ENCODE measurements at regions of chr11 and their contacts with region 1.

Region 1: DNA sequence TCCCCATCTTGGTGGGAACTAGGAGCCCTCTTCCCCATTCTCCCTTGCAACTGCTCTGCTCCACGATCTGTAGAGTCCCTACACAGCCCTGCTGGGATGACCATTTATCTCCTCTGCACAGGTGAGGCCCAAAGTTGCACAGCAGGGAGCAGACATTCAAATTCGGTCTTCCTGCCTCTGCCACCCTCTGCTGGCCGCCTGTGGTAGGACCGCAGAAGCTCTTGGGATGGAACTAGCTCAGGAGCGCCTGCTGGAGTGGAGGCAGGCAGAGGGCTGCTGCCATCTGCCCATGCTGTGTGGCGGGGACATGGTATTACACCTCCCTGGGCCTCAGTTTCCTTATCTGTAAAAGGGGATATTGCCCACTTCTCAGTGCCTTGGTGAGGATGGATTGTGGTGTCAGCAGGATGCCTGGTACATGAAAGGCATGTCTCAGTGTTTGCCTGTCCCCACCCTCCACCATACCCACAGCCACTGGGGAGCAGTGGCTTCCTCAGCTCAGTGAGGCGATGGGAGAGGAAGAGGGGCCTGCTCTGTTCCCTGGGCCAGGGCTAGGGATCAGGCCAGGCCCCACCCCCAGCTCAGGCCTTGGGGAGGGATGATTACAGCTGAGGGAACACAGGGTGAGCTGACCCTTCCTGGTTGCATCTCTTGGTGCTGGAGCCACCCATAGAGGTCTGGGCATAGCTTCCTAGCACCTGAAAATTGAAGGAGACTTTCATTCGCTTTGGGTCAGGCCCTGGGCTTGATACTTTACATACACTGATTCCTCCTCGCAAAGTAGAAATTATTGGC is 11.3 kb upstream of the OMP start:
- DNase-seq: peak; percentile 73 to 97
- H3K4me3 ChIP-seq: no peak overlapping the region
- H3K27ac ChIP-seq: no peak overlapping the region
- H3K4me1 ChIP-seq: peaks cover 0 to 8% (median 2%) of the 10 kb centered on the region in 4 experiments; a peak in 3 of 7 replicates
- H3K27me3 ChIP-seq: no peaks in the 10 kb centered on the region
- CTCF ChIP-seq: peak; percentile 96 to 100 (median 100)
- EP300 ChIP-seq: no peak
- POLR2A ChIP-seq: no peak
- RAD21 ChIP-seq: peak; percentile 92 to 93

Region 2: DNA sequence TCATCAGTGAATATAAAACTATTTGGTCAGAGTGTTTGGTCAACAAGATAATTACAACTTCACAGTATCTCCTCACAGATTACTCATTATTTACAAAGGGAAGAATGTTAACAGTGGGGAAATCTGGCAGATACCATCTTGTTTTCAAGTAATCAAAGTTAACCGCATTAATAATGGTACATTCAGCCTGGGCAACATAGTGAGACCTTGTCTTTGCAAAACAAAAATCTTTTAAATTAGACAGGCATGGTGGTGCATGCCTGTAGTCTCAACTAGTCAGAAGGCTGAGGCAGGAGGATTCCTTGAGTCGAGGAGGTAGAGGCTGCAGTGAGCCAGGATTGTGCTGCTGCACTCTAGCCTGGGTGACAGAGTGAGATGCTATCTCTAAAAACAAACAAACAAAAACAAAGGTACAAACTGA is 152.1 kb before region 1 on chr11:
- CTCF ChIA-PET with region 1: no interaction called
- POLR2A ChIA-PET with region 1: no interaction called
- DNase-seq: no peak
- H3K4me3 ChIP-seq: no peak overlapping the region
- H3K27ac ChIP-seq: no peak overlapping the region
- H3K4me1 ChIP-seq: peaks cover 0 to 7% (median 0%) of the 10 kb centered on the region in 4 experiments; a peak in 3 of 7 replicates
- H3K27me3 ChIP-seq: no peaks in the 10 kb centered on the region
- CTCF ChIP-seq: no peak
- EP300 ChIP-seq: no peak
- POLR2A ChIP-seq: no peak
- RAD21 ChIP-seq: no peak

Region 3: GRCh38 chr11:76990628-76991027 is 100.7 kb before region 1 on chr11:
- CTCF ChIA-PET with region 1: no interaction called
- POLR2A ChIA-PET with region 1: no interaction called
- DNase-seq: no peak
- H3K4me3 ChIP-seq: no peak overlapping the region
- H3K27ac ChIP-seq: no peak overlapping the region
- H3K4me1 ChIP-seq: no peaks in the 10 kb centered on the region
- H3K27me3 ChIP-seq: no peaks in the 10 kb centered on the region
- CTCF ChIP-seq: no peak
- EP300 ChIP-seq: no peak
- POLR2A ChIP-seq: no peak
- RAD21 ChIP-seq: no peak

Region 4: DNA sequence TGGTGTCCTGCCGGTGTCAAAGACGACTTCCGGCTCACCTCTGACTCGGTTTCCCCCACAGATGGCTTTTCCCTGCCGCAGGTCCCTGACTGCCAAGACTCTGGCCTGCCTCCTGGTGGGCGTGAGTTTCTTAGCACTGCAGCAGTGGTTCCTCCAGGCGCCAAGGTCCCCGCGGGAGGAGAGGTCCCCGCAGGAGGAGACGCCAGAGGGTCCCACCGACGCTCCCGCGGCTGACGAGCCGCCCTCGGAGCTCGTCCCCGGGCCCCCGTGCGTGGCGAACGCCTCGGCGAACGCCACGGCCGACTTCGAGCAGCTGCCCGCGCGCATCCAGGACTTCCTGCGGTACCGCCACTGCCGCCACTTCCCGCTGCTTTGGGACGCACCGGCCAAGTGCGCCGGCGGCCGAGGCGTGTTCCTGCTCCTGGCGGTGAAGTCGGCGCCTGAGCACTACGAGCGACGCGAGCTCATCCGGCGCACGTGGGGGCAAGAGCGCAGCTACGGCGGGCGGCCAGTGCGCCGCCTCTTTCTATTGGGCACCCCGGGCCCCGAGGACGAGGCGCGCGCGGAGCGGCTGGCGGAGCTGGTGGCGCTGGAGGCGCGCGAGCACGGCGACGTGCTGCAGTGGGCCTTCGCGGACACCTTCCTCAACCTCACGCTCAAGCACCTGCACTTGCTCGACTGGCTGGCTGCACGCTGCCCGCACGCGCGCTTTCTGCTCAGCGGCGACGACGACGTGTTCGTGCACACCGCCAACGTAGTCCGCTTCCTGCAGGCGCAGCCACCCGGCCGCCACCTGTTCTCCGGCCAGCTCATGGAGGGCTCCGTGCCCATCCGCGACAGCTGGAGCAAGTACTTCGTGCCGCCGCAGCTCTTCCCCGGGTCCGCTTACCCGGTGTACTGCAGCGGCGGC is 51.6 kb before region 1 on chr11:
- CTCF ChIA-PET with region 1: interaction called, 23 read pairs
- POLR2A ChIA-PET with region 1: interaction called, 3 read pairs
- DNase-seq: peak in 1 of 2 experiments; percentile 86
- H3K4me3 ChIP-seq: peak overlapping the region; percentile 9 to 51 (median 17); a peak in 5 of 8 replicates
- H3K27ac ChIP-seq: no peak overlapping the region
- H3K4me1 ChIP-seq: peaks cover 0 to 9% (median 4%) of the 10 kb centered on the region in 4 experiments; a peak in 5 of 7 replicates
- H3K27me3 ChIP-seq: peaks cover 14 to 34% (median 30%) of the 10 kb centered on the region in 4 experiments
- CTCF ChIP-seq: peak; percentile 71 to 79 (median 72)
- EP300 ChIP-seq: no peak
- POLR2A ChIP-seq: no peak
- RAD21 ChIP-seq: peak; percentile 54 to 70; a peak in 3 of 4 replicates

Region 5: DNA sequence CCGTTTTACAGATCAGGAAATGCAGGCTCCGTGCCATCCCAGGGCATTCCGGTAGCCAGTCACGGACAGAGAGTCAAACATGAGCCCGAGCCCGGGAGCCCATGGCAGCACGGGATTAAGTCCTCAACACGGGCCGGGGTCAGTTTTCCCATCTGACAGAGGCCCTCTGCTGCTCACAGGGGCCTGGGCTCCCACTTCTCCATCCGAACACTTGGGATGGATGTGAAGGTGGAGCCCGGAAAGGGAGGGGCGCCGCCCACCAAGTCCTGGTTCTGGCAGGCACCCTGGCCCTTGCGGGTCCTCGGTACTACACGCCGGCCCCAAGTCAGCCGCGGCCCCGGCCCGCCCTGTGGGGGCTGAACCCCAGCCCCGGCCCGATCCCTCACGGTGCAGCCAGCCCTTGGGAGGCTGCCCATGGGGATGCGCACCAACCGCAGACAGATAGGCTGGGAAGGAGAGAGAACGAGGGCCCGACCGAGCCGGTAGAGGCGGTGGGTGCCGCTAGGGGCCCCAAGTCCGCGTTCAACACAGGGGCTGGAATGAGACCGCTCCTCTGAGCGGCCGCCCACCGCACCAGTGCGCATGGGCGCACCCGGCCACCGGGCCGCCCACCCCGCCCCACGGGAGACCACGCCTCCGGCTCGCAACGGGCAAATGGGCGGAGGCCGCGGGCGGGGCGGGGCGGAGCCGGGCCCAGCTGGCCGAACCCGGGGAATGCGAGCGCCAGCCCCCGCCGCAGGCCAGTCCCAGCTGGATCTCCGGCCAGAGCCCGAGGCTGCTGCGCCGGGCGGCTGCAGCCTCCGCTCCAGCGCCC is 24.9 kb before region 1 on chr11 and contains the start of gene CAPN5:
- CTCF ChIA-PET with region 1: interaction called, 80 read pairs
- POLR2A ChIA-PET with region 1: interaction called, 4 read pairs
- DNase-seq: peak; percentile 84 to 96
- H3K4me3 ChIP-seq: peak within 1 kb of the TSS; percentile 58 to 89 (median 66)
- H3K27ac ChIP-seq: peak within 1 kb of the TSS; percentile 50; the same call in 1 of the 2 replicates
- H3K4me1 ChIP-seq: peaks cover 0 to 7% (median under 1%) of the 10 kb centered on the region in 4 experiments; a peak in 5 of 7 replicates
- H3K27me3 ChIP-seq: peaks cover 0 to 3% (median 0%) of the 10 kb centered on the region in 4 experiments; a peak in 3 of 7 replicates
- CTCF ChIP-seq: peak; percentile 49 to 57 (median 51)
- EP300 ChIP-seq: peak in 1 of 2 experiments; percentile 27; a peak in 1 of 3 replicates
- POLR2A ChIP-seq: peak in 1 of 2 experiments; percentile 88; a peak in 2 of 3 replicates
- RAD21 ChIP-seq: peak; percentile 31 to 40; a peak in 2 of 4 replicates
- total RNA-seq, gene CAPN5: 22.4 and 22.6 TPM in 2 replicates

Region 6: GRCh38 chr11:77073328-77074001 is 17.9 kb before region 1 on chr11:
- CTCF ChIA-PET with region 1: interaction called, 95 read pairs
- POLR2A ChIA-PET with region 1: interaction called, 3 read pairs
- DNase-seq: no peak
- H3K4me3 ChIP-seq: no peak overlapping the region
- H3K27ac ChIP-seq: no peak overlapping the region
- H3K4me1 ChIP-seq: peaks cover 0 to 4% (median 0%) of the 10 kb centered on the region in 4 experiments; a peak in 2 of 7 replicates
- H3K27me3 ChIP-seq: no peaks in the 10 kb centered on the region
- CTCF ChIP-seq: no peak
- EP300 ChIP-seq: no peak
- POLR2A ChIP-seq: no peak
- RAD21 ChIP-seq: no peak

Region 7: DNA sequence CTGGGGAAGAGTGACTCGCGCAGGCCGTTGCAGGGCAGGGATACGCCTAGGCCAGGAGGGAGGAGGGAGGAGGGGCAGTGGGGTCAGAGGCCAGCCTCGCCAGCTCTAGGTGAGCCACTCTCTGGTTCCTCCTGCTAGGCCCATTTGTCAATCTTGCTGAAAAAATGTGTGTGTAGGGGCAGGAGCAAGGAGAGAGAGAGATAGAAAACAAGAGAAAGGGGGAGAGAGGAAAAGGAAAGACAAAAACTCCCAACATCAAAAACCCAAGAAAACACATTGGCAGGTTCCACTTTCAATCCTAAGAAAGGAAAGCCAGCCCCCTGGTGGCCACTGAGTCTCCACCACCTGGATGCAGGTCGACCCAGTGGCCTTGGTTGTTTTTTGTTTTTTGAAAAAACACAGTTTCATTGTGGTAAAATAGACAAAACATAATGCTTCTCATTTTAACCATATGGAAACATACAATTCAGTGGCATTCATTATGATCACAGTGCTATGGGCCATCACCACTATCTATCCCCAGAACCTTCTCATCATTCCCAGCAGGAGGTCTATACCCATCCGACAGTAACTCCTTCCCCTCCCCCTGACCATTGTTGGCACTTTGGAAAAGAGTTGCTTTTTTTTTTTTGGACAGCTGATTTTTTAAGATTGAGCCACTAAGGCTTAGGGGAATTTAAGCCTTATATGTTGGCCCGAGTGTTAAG is 22.2 kb after region 1 on chr11:
- CTCF ChIA-PET with region 1: interaction called, 297 read pairs
- POLR2A ChIA-PET with region 1: no interaction called
- DNase-seq: peak in 1 of 2 experiments; percentile 75
- H3K4me3 ChIP-seq: no peak overlapping the region
- H3K27ac ChIP-seq: no peak overlapping the region
- H3K4me1 ChIP-seq: peaks cover 0 to 3% (median 1%) of the 10 kb centered on the region in 4 experiments; a peak in 3 of 7 replicates
- H3K27me3 ChIP-seq: no peaks in the 10 kb centered on the region
- CTCF ChIP-seq: peak; percentile 44 to 66 (median 59)
- EP300 ChIP-seq: no peak
- POLR2A ChIP-seq: no peak
- RAD21 ChIP-seq: peak; percentile 47 to 50

Region 8: GRCh38 chr11:77121096-77121640 is 29.8 kb after region 1 on chr11:
- CTCF ChIA-PET with region 1: interaction called, 297 read pairs
- POLR2A ChIA-PET with region 1: no interaction called
- DNase-seq: no peak
- H3K4me3 ChIP-seq: no peak overlapping the region
- H3K27ac ChIP-seq: no peak overlapping the region
- H3K4me1 ChIP-seq: no peaks in the 10 kb centered on the region
- H3K27me3 ChIP-seq: no peaks in the 10 kb centered on the region
- CTCF ChIP-seq: no peak
- EP300 ChIP-seq: no peak
- POLR2A ChIP-seq: no peak
- RAD21 ChIP-seq: no peak

Region 9: DNA sequence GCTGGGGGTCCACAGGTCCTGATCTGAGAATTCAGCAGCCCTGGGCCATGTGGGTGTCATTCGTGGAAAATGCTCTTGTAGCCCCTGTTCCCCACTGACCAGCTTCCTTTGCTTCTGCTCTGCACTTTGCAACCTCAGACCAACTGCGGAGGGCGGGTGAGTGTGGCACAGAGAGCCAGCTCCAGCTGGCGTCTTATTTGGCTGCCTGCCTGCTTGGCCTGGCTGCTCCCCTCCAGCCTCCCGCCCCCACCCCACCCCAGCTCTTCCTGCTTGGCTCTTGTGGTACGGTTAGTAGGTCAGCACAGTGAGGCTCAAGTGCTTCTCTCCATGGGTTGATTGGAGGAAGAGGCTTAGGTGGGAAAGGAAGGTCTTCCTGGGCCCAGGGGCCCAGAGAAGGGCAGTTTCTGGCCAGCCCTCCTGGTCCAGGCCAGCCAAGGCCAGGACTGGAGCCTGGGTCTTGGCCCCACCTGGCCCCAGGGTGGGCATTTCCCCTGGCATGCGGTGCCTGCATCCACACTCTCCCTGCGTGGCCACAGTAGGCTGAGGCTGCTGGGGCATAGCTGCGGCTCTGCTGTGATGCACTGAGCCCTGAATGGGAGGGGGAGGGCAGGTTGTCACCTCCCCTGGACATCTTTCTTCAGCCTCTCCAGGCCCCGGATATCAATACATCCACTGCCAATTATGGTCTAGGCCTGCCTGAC is 63.2 kb after region 1 on chr11:
- CTCF ChIA-PET with region 1: interaction called, 11 read pairs
- POLR2A ChIA-PET with region 1: no interaction called
- DNase-seq: no peak
- H3K4me3 ChIP-seq: no peak overlapping the region
- H3K27ac ChIP-seq: no peak overlapping the region
- H3K4me1 ChIP-seq: peaks cover 0 to 4% (median 0%) of the 10 kb centered on the region in 4 experiments; a peak in 1 of 7 replicates
- H3K27me3 ChIP-seq: no peaks in the 10 kb centered on the region
- CTCF ChIP-seq: no peak
- EP300 ChIP-seq: no peak
- POLR2A ChIP-seq: no peak
- RAD21 ChIP-seq: no peak

Measured in H1 (cell line).